Ovary (tissue), 10 donors: ENCODE measurements at regions of chr2 and their contacts with region 1.

Region 1: GRCh38 chr2:55159037-55159651 is 72.9 kb downstream of the CLHC1 start:
- DNase-seq: peak in 4 of 5 donors; percentile 41 to 69 (median 52)
- H3K4me3 ChIP-seq: no peak overlapping the region
- H3K27ac ChIP-seq: no peak overlapping the region
- H3K4me1 ChIP-seq: peaks cover 23% of the 10 kb centered on the region
- H3K27me3 ChIP-seq: no peaks in the 10 kb centered on the region
- CTCF ChIP-seq: no peak
- EP300 ChIP-seq: no peak
- POLR2A ChIP-seq: no peak

Region 2: GRCh38 chr2:54176577-54176976 is 982.6 kb before region 1 on chr2:
- intact Hi-C with region 1: no loop called
- DNase-seq: peak in 4 of 5 donors; percentile 46 to 61 (median 50)
- H3K4me3 ChIP-seq: no peak overlapping the region
- H3K27ac ChIP-seq: no peak overlapping the region
- H3K4me1 ChIP-seq: no peaks in the 10 kb centered on the region
- H3K27me3 ChIP-seq: no peaks in the 10 kb centered on the region
- CTCF ChIP-seq: no peak
- EP300 ChIP-seq: no peak
- POLR2A ChIP-seq: no peak

Region 3: DNA sequence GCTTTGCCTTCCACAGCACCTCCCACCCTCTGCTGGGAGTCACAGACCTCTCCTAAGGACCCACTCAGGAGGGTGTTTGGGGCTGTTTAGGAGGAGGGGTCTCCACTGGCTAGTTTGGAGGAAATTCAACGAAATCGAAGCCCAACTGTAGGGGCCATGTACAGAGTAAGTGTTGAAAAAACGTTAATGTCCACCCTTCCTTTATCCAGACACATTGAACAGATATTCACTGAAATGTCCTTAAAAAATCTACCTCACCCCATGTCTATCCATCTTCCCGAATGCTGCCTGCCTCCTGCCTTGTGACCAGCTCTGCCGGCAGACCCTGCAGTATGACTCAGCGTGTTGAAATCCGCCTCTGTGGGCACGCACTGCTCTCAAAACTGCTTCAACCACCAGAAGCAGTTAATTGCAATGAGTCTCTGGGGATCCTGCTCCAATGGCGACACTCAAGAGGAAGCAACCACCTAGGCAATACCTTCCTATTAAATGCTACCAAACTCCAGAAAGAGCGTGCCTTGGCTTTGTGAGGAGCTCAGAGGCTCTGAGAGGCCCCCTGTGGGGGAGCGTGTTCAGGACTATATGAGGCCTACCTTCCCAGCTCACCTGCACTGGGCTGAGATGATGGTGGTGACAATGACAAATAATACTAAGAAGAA is 47.4 kb before region 1 on chr2:
- intact Hi-C with region 1: loop called in 3 of 4 experiments (anchors 5 to 10 kb)
- DNase-seq: peak; percentile 54 to 67 (median 62)
- H3K4me3 ChIP-seq: no peak overlapping the region
- H3K27ac ChIP-seq: peak overlapping the region in 1 of 2 donors; percentile 82
- H3K4me1 ChIP-seq: peaks cover 12% of the 10 kb centered on the region
- H3K27me3 ChIP-seq: no peaks in the 10 kb centered on the region
- CTCF ChIP-seq: no peak
- EP300 ChIP-seq: no peak
- POLR2A ChIP-seq: no peak

Region 4: DNA sequence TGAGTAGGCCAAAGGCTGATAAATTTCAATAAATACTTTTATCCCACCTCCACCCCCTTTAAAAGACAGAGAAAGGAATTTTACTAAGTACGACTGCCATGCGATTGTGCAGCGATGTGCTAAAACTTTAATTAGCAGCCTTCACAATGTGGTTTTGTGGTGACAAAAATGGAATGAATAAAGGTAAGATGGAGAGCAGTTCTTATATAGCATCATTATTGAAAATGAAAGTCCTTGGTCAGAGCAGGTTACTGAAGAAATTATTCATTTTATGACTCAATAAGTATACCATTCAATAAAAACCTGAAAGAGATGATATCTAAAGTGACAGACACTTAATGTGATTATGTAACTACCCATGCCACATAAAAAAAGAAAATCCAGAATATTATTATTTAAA is 143.1 kb after region 1 on chr2:
- intact Hi-C with region 1: no loop called
- DNase-seq: no peak
- H3K4me3 ChIP-seq: no peak overlapping the region
- H3K27ac ChIP-seq: no peak overlapping the region
- H3K4me1 ChIP-seq: no peaks in the 10 kb centered on the region
- H3K27me3 ChIP-seq: no peaks in the 10 kb centered on the region
- CTCF ChIP-seq: no peak
- EP300 ChIP-seq: no peak
- POLR2A ChIP-seq: no peak